K562 (cell line): ENCODE measurements at regions of chr14 and their contacts with region 1.

Region 1: GRCh38 chr14:29548948-29549370 is 378.7 kb downstream of the PRKD1 start:
- DNase-seq: peak; percentile 50 to 59 (median 59)
- ATAC-seq: peak; percentile 95
- H3K4me3 ChIP-seq: no peak overlapping the region
- H3K27ac ChIP-seq: no peak overlapping the region
- H3K4me1 ChIP-seq: no peaks in the 10 kb centered on the region
- H3K27me3 ChIP-seq: no peaks in the 10 kb centered on the region
- CTCF ChIP-seq: peak; percentile 41 to 51 (median 44); a peak in 4 of 6 replicates
- EP300 ChIP-seq: no peak
- POLR2A ChIP-seq: no peak
- RAD21 ChIP-seq: peak; percentile 50 to 63

Region 2: DNA sequence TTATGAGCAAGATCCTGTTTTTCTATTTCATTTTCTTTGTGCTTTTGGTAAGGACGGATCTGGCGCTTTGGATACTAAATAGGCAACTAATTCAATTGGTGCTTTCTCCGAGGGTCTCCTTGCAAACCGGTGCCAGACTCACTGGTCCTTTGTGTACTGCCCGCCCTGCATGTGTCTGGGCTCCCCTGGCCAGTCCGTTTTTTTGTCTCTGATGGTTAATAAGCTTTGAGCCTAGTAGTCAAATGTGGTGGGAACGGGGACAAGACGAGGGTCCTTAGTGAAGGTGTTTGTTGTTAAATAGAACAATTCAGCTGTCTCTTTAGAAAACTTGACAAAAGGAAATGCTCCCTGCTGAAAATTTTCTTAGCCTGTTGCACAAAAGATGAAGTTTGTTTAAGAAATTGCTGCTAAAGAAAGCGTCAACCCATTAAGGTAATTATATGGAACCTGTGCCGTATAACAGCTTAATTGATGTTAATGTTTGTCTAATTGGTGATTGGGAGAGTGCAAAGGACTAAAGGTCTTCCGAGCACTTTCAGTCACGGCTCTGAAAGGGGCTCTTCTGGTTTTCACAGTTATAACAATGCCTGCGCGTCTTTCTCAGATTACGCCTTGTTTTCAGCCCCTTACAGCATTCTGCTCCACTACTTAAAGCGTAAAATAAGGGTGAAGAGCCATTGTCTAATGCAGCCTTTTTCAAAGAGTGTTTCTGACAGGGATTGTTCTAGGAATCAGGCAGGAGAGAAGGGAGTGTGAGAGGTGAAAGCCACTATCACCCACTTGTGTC is 158.7 kb before region 1 on chr14:
- CTCF ChIA-PET with region 1: no interaction called
- POLR2A ChIA-PET with region 1: no interaction called
- in situ Hi-C with region 1: no loop called
- intact Hi-C with region 1: no loop called
- DNase-seq: no peak
- ATAC-seq: no peak
- H3K4me3 ChIP-seq: no peak overlapping the region
- H3K27ac ChIP-seq: no peak overlapping the region
- H3K4me1 ChIP-seq: no peaks in the 10 kb centered on the region
- H3K27me3 ChIP-seq: no peaks in the 10 kb centered on the region
- CTCF ChIP-seq: no peak
- EP300 ChIP-seq: no peak
- POLR2A ChIP-seq: no peak
- RAD21 ChIP-seq: no peak

Region 3: DNA sequence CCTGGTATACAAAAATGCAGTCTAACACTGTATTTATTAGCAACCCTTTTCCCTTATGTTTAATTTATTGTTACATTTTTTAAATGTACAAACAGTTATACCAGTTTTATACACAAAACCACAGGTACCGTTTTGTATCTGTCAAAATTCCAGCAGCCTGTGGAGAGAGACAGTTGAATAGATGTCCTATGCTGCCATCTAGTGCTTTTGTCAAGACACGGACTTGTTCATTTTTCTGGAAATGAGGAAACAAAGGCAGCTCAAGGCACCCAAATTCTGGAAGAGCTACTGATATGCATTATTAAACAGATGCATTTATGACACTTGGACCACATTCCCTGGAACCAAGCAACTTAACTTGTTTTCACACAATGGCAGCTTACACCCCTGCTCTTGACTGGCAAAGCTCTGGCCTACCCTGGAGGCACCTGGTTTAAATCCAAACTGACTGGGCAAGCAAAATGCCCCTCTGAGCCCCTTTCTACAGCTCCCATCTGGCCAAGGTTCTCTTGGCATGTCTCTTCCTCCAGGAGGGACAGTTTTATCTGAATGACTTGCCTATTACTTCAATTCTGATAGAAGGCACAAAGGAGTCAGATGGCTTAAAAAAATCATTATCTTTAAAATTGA is 665.6 kb after region 1 on chr14:
- CTCF ChIA-PET with region 1: no interaction called
- POLR2A ChIA-PET with region 1: no interaction called
- in situ Hi-C with region 1: loop called (anchors 25 kb)
- intact Hi-C with region 1: loop called (anchors 2 kb)
- DNase-seq: peak; percentile 7 to 46 (median 16)
- ATAC-seq: peak; percentile 74
- H3K4me3 ChIP-seq: no peak overlapping the region
- H3K27ac ChIP-seq: no peak overlapping the region
- H3K4me1 ChIP-seq: no peaks in the 10 kb centered on the region
- H3K27me3 ChIP-seq: no peaks in the 10 kb centered on the region
- CTCF ChIP-seq: peak; percentile 41 to 66 (median 53); a peak in 5 of 6 replicates
- EP300 ChIP-seq: no peak
- POLR2A ChIP-seq: no peak
- RAD21 ChIP-seq: peak; percentile 58 to 66